ENCODE measurements at regions of chr1 and their contacts with region 1.

Region 1: DNA sequence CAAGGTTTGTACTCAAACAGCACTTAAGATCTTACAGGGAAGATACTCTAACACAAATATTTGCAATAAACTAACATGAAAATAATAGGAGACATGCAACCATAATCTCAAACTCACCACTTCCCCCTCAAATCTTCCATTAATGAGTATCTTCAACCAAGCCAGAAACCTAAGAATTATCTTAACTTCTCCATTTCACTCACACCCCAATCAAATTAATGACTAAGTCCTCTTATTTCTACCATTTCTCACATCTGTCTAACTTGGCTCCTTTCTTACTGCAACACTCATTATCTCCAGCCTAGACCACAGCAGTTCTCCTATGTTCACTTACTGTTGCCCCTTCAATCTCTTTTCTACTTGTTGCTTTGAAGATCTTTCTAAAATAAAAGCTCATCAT is 10.4 kb downstream of the RBBP5 start:
- DNase-seq: no peak
- ATAC-seq: no peak
- H3K4me3 Mint-ChIP-seq: no peak overlapping the region
- H3K27ac Mint-ChIP-seq: no peak overlapping the region
- H3K4me1 Mint-ChIP-seq: peaks cover 14% of the 10 kb centered on the region
- H3K27me3 Mint-ChIP-seq: no peaks in the 10 kb centered on the region
- CTCF ChIP-seq: no peak

Region 2: GRCh38 chr1:205042911-205043806 is 68.2 kb before region 1 on chr1 and contains the start of gene CNTN2:
- CTCF ChIA-PET with region 1: no interaction called
- POLR2A ChIA-PET with region 1: no interaction called
- intact Hi-C with region 1: no loop called
- DNase-seq: no peak
- ATAC-seq: no peak
- H3K4me3 Mint-ChIP-seq: no peak within 1 kb of the TSS
- H3K27ac Mint-ChIP-seq: no peak within 1 kb of the TSS
- H3K4me1 Mint-ChIP-seq: no peaks in the 10 kb centered on the region
- H3K27me3 Mint-ChIP-seq: peaks cover 38% of the 10 kb centered on the region
- CTCF ChIP-seq: no peak
- total RNA-seq, gene CNTN2: not detected

Region 3: DNA sequence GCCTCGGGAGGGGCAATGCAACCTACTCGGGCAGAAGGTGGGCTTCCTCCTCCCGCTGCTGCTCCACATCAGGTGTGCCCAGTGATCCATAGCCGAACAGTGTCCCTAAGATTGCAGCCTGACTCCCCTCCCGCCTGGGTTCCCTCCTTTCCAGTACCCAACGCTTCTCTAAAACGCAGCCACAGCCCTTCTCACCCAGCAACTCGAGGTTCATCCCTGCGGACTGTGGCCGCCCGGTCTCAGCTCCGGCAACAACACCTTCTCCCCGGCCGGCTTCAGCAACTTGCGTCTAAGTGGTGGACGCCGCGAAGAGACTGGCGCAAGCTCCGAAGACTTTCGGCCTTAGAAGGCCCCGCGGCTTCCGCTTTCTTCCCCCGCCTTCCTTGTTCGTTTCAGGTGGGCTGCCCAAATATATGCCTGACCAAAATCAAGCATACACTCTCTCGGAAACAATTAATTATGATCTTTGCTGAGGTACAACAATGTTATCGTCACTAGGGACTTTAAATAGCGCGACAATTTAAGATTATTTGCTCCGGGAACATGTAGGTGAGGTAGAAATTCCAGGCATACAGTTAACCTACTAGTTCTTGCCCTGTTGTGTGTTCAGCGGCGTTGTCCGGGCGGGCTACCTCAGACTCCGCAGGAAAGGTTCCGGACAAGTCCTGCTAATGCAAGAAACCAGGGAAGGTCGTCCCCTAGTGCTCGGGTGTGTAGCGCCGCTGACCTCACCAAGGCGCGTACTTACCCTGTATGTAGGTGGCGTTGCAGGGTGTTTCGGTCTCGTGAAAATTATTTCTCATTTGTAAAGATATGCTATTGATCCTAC is 10.5 kb after region 1 on chr1 and contains the start of gene RBBP5:
- CTCF ChIA-PET with region 1: interaction called, 3 read pairs
- POLR2A ChIA-PET with region 1: interaction called, 23 read pairs
- intact Hi-C with region 1: no loop called
- DNase-seq: peak; percentile 96
- ATAC-seq: peak; percentile 96
- H3K4me3 Mint-ChIP-seq: peak within 1 kb of the TSS; percentile 95
- H3K27ac Mint-ChIP-seq: peak within 1 kb of the TSS; percentile 97
- H3K4me1 Mint-ChIP-seq: peaks cover 27% of the 10 kb centered on the region
- H3K27me3 Mint-ChIP-seq: no peaks in the 10 kb centered on the region
- CTCF ChIP-seq: peak; percentile 43
- total RNA-seq, gene RBBP5: 18.8 to 21.6 TPM